Activated T-helper 1 cell treated with anti-CD3 and anti-CD28 coated beads, Interleukin-12 subunit alpha, Interleukin-12 subunit beta, Interleukin-2, Interleukin-4 antibody, amounts not matched to agents 30 ng/mL and 10 ng/mL and 1 ng/mL, durations not matched to agents 14 hours and 24 hours and 36 hours (primary cell): ENCODE measurements at regions of chr20 and their contacts with region 1.

Region 1: DNA sequence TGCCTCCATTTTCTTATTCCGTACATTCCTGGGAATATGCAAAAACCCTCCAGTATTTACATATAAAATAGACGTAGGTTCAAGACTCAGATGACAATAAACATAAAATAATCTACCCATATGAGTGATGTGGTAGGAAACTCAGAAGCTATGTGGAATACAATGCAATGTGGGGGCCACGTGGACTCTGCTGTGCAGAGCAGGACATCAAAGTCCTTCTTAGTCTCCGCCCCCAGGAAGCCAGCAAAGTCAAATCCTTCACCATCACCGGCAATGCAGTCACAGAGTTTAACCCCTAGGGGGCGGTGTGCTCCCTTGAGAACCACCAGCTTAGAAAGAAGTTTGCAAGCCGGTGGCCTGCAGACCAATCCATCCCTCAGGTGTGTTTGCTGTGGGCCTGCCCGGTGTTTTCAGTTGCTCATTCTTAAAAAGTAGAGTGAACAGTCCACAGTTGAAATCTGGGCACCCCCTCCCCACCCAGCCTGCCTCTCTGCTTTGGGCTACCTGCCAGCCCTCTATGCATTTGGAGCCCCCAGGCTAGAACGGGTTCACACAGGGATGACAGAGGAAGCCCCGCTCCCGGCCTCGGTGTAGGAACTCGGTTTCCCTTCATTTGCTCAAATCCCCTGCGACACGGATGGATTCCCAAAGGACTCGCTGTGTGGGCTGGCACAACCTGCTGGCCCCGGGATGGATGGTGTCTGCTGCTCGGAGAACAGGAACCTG is 59.9 kb downstream of the SULF2 start:
- DNase-seq: peak; percentile 81
- H3K4me3 Mint-ChIP-seq: no peak overlapping the region
- H3K27ac Mint-ChIP-seq: peak overlapping the region; percentile 14
- H3K4me1 Mint-ChIP-seq: peaks cover 46% of the 10 kb centered on the region
- H3K27me3 Mint-ChIP-seq: no peaks in the 10 kb centered on the region

Region 2: DNA sequence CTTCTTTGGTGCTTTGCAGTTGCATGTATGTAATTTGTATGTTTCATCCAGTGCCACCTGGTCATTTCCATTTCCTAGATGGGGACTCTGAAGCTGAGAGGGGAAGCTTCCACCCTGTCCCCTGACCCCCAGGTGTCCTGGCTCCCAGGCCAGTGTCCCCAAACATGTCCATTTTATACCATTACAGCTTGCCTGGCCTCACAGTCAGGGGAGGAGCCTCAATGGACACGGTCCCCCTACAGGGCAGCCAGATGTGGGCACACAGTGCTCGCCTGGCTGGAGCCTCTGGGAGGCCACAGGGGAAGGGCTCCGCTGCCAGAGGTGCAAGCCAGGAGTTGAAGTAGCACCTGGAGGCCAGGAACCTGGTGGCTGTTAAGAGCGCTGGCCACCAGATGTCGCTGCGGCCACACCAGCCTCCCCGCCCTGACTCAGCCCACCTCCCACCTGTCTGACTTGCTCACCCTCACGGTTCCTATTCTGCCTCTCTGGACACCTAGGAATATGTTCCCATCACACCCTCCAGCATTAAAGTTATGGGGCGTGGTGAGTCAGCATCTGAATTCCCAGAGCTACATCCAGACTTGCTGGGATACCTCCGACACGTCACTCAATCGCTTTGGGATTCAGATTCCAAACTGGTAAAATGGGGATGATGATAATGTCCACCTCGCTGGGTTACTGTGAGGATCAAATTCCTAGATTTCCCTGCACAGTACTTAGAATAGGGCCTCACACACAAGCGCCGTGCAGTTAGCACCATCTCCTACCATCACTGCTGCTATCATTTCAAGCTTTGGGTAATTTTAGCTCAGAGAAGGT is 47.6 kb before region 1 on chr20:
- intact Hi-C with region 1: loop called (anchors 1 kb)
- DNase-seq: peak; percentile 21
- H3K4me3 Mint-ChIP-seq: no peak overlapping the region
- H3K27ac Mint-ChIP-seq: no peak overlapping the region
- H3K4me1 Mint-ChIP-seq: no peaks in the 10 kb centered on the region
- H3K27me3 Mint-ChIP-seq: no peaks in the 10 kb centered on the region